ENCODE measurements at regions of chrX and their contacts with region 1.

Region 1: DNA sequence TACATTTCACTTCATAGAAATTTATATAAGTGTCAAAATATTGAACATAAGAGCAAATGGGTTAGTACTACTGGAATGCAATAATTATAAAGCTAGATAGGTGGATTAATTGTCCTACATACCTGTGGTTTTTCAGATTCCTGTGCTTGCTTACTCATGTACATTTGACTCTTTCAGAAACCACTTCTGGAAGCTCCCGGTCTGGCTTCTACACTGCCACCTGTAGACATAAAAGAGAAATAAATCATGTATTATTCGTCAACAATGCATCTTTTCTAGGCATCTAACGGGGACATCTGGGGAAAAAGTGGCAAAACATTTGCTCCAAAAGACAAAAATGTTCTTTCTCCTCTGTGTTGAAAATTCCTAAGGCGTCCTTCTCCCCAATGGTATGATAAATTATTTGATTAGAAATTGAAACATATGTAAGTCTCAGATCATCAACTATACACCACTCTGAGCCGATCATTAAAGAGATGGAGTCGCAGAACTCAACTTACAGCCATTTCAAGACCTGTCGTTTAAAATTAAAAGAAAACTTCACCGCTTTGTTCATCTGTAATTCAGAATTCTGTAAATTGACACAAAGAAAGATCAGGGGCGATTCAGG is 648.7 kb upstream of the DIPK2B start:
- DNase-seq: no peak
- ATAC-seq: no peak
- H3K4me3 ChIP-seq: peak overlapping the region; percentile 10
- H3K27ac ChIP-seq: no peak overlapping the region
- H3K4me1 ChIP-seq: no peaks in the 10 kb centered on the region
- H3K27me3 ChIP-seq: no peaks in the 10 kb centered on the region

Region 2: DNA sequence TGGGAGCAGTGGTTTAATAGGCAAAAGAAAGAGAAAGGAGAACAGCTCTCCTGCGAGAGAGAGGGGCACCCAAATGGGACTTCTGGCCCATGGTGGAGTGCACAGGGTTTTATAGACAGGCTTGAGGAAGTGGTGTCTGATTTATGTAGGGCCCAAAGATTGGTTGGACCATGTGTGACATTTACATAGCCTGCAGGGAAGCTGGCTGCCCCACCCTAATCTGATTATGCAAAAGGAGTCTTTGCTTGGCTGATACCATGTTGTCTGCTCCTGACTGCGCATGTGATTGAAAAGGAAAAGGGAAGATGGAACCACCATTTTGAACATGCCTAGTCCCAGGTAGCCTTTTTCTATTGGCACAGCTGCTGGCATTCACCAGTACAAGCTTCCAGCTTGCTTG is 548.7 kb before region 1 on chrX:
- intact Hi-C with region 1: no loop called
- DNase-seq: no peak
- ATAC-seq: no peak
- H3K4me3 ChIP-seq: no peak overlapping the region
- H3K27ac ChIP-seq: no peak overlapping the region
- H3K4me1 ChIP-seq: no peaks in the 10 kb centered on the region
- H3K27me3 ChIP-seq: no peaks in the 10 kb centered on the region

Region 3: DNA sequence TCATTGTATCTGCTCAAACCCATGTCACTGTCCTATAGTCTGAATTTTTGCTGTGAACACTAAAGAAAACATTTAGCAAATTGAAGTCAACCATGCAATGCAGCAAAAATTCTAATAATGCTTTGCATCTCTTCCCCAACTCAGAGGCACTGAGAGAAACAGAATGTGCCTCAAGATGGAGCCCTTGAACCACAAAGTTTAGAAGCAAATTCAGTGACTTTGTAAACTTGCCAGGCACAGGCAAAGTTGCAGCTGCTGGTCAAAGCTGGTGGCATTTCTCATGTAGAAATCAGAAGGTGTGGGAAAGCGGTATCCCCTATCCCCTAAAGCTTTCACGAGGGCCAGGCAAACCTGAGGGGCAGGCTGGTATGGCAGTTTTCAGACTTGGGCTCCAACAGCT is 527.0 kb before region 1 on chrX:
- intact Hi-C with region 1: loop called in 1 of 4 experiments (anchors 10 kb)
- DNase-seq: peak in 2 of 3 donors; percentile 14 to 28
- ATAC-seq: no peak
- H3K4me3 ChIP-seq: no peak overlapping the region
- H3K27ac ChIP-seq: no peak overlapping the region
- H3K4me1 ChIP-seq: no peaks in the 10 kb centered on the region
- H3K27me3 ChIP-seq: no peaks in the 10 kb centered on the region

Region 4: DNA sequence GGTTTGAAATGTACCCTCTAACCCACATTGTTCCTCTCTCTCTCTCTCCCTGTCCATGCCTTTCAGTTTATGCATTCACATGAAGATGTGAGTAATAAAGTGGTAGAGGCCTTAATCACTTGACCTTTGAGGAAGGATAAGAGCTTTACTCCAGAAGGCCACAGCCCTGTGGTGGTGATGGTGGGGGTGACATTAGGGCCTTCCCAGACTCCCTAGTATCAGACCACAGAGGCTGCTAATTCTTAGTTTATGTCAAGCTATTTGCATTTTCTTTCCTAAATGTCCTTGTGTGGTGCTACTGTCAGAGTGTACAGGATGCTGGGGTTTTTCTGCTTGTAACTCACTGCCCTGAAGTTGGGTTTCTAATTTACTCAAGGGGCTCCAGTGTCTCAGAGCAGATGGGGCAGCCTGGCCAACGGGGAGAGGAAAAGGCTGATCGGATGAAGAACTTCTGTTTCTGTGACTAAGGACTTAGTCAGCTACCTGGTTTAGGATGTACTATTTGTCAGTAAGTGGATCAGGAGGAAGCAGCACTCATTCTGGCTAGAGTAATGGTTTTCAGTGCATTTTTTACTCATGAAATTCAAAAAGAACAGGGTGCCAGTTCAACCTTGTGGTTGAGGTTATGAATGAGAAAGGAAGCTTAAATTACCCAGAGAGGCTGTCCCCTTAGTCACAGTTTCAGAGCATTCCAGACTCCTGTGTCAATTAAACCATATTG is 139.1 kb before region 1 on chrX:
- intact Hi-C with region 1: no loop called
- DNase-seq: no peak
- ATAC-seq: no peak
- H3K4me3 ChIP-seq: no peak overlapping the region
- H3K27ac ChIP-seq: no peak overlapping the region
- H3K4me1 ChIP-seq: no peaks in the 10 kb centered on the region
- H3K27me3 ChIP-seq: no peaks in the 10 kb centered on the region